ENCODE measurements at regions of chr1 and their contacts with region 1.

Region 1: GRCh38 chr1:212368073-212368484 is 46.6 kb downstream of the PACC1 start:
- DNase-seq: no peak
- H3K4me3 ChIP-seq: no peak overlapping the region
- H3K27ac ChIP-seq: no peak overlapping the region
- H3K4me1 ChIP-seq: peaks cover 0 to 11% (median 0%) of the 10 kb centered on the region in 3 donors
- H3K27me3 ChIP-seq: no peaks in the 10 kb centered on the region
- CTCF ChIP-seq: peak; percentile 24 to 88 (median 79)
- POLR2A ChIP-seq: no peak

Region 2: DNA sequence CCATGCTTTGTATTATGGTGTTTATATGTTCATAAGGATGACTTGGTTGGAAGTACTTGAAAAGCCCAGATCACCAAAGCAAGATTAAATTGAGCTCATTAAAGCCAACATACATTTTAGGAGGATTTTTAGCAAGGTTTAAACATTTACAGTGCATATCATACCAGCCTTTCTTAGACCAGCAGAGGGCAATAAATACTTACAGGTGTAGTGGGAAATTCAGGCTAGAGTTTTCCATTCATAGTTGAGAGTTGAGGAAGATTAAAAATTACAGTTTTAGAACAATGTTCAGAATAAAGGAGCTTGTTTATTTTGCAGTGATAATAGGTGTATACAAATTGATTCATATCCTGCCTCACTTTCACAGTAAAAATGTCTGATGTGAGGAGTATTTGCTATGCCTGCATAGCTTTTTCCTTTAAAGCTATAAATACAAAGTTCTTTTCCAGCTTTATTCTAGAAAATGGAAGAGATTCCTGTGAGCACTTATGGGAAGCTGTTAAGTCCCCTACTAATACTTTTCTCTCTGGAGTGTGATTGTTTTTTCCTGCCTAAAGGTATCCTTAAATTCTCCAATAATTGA is 297.3 kb before region 1 on chr1:
- intact Hi-C with region 1: loop called (anchors 5 kb)
- DNase-seq: no peak
- H3K4me3 ChIP-seq: no peak overlapping the region
- H3K27ac ChIP-seq: peak overlapping the region in 1 of 4 donors; percentile 16
- H3K4me1 ChIP-seq: no peaks in the 10 kb centered on the region
- H3K27me3 ChIP-seq: no peaks in the 10 kb centered on the region
- CTCF ChIP-seq: peak; percentile 68 to 88 (median 79)
- POLR2A ChIP-seq: no peak

Region 3: DNA sequence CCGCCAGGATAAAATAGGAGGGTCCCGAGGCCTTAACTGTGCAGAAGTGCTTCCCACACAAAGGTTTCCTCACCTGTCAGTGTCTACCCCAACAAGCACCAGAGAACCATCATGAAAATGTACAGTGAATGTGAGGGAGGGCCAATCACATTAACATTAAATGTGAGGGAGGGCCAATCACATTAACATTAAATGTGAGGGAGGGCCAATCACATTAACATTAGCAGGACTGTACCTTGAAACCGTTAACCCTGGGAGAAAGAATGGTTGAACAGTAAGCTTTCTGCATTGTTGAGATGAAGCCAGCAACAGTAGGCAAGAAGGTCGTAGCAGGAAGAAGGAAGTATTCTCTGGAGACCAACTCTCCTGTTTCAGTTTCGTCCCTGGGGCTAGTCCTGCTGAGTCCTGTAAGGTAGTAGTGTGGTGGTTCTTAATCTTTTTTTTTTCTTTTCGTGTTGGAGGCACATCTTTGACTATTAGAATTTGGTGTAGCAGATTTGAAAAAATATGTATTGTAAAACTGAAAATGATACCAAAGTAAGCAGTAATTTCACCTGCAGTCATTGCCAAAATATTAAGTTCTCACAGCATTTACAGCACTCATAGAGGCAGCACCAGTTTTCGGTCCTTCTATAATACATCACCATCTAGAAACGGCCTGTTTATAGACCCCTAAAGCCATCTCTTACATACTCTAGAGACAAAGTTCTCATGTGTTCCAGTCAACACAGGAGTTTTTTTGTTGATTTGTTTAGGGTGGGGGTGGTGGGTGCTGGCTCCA is 181.5 kb before region 1 on chr1:
- intact Hi-C with region 1: no loop called
- DNase-seq: no peak
- H3K4me3 ChIP-seq: no peak overlapping the region
- H3K27ac ChIP-seq: peak overlapping the region in 2 of 4 donors; percentile 23 to 25
- H3K4me1 ChIP-seq: peaks cover 0 to 45% (median 23%) of the 10 kb centered on the region in 3 donors
- H3K27me3 ChIP-seq: no peaks in the 10 kb centered on the region
- CTCF ChIP-seq: no peak
- POLR2A ChIP-seq: no peak

Region 4: DNA sequence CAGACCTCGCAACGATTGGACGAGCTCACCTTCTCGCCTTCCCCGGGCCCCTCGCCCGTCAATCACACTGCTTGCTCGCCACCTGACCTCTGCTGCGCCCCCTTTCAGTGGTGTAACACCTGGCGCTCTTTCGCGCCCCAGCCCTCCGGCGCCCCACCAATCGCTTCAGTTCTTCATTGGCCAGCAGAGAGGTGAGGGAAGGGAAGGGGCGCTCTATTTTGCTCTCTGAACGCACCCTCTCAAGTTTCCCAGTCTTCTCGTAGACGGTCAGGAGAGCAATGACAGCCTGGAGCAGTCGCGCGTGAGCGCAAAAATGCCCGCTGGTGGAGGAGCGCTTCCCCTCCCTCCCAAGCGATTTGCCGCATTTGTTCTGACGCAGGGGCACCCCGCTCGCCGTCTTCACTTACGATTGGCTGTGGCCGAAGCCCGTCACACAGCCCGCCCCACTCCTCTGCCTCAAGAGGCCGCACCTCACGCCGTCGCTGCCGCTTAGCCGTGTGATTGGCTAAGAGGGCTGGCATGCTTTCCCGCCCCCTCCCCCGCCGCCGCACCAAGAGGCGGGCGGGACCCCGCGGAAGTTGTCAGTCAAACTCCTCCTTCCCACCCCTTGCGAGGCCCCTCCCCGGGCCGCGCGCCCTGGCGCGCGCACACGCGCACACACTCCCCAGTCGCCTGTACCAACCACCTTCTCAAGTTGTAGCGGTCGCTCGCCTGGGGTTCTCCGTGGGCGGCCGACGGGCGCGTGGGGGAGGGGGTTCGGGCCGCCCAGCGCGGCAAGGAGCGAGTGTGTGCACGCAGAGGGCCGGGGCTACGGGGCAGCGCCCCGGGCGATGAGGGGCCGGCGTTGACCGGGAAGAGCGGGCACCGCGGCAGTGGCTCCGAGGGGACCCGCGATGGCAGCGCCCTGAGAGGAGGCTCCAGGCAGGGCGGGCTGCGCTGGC is 83.1 kb before region 1 on chr1 and contains the start of gene PPP2R5A:
- intact Hi-C with region 1: no loop called
- DNase-seq: peak; percentile 97
- H3K4me3 ChIP-seq: peak within 1 kb of the TSS; percentile 81 to 98 (median 90)
- H3K27ac ChIP-seq: peak within 1 kb of the TSS; percentile 99 to 100 (median 100)
- H3K4me1 ChIP-seq: peaks cover 4 to 42% (median 13%) of the 10 kb centered on the region in 3 donors
- H3K27me3 ChIP-seq: no peaks in the 10 kb centered on the region
- CTCF ChIP-seq: peak in 4 of 6 experiments; percentile 23 to 45 (median 30)
- POLR2A ChIP-seq: peak in 3 of 4 donors; percentile 81 to 98 (median 98)
- total RNA-seq, gene PPP2R5A: 57.5 to 78.8 (median 63.7) TPM

Region 5: GRCh38 chr1:212455803-212456528 is 87.9 kb after region 1 on chr1:
- intact Hi-C with region 1: loop called (anchors 5 kb)
- DNase-seq: no peak
- H3K4me3 ChIP-seq: peak overlapping the region in 3 of 4 donors; percentile 15 to 28 (median 19)
- H3K27ac ChIP-seq: peak overlapping the region in 3 of 4 donors; percentile 59 to 76 (median 71)
- H3K4me1 ChIP-seq: peaks cover 0 to 26% (median 18%) of the 10 kb centered on the region in 3 donors
- H3K27me3 ChIP-seq: no peaks in the 10 kb centered on the region
- CTCF ChIP-seq: peak; percentile 93 to 100 (median 97)
- POLR2A ChIP-seq: no peak

Region 6: DNA sequence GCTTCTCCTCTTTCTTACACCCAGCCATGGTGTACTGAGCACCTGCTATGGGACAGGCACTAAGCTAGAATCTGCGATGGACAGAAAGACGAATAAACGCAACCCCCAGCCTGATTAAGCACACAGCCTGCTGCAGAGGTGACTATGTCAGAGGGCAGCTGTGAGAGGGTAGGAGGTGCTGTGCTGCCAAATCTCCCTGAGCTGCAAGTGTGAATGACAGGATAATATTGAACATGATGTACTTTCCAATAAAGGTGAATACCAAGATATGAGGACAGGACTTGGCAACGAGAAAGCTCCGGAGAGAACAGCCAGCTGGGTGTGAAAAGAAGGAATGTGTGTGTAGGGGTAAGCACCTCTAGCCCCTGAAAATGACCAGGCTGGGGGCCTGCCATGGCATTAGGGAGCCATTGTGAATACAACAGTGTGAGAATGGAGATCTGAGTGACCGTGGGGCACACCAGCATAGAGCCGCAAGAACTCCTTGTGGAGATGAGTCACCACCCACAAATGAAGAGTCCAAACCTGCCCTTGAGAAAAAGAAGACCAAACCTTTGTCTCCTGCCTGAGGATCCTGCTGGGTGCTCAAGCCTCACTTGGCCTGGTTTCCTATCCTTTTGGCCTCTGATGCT is 157.5 kb after region 1 on chr1:
- intact Hi-C with region 1: no loop called
- DNase-seq: no peak
- H3K4me3 ChIP-seq: no peak overlapping the region
- H3K27ac ChIP-seq: no peak overlapping the region
- H3K4me1 ChIP-seq: no peaks in the 10 kb centered on the region
- H3K27me3 ChIP-seq: peaks cover 0 to 10% (median 0%) of the 10 kb centered on the region in 4 donors
- CTCF ChIP-seq: no peak
- POLR2A ChIP-seq: no peak